Sigmoid colon (tissue), 7 donors: ENCODE measurements at regions of chr11 and their contacts with region 1.

Region 1: GRCh38 chr11:123246749-123247495 is 51.9 kb upstream of the CLMP start:
- DNase-seq: peak; percentile 91
- H3K4me3 ChIP-seq: no peak overlapping the region
- H3K27ac ChIP-seq: peak overlapping the region in 1 of 4 donors; percentile 5
- H3K4me1 ChIP-seq: peaks cover 0 to 22% (median 17%) of the 10 kb centered on the region in 4 donors
- H3K27me3 ChIP-seq: no peaks in the 10 kb centered on the region
- CTCF ChIP-seq: peak; percentile 84 to 99 (median 95)
- EP300 ChIP-seq: no peak
- POLR2A ChIP-seq: no peak

Region 2: GRCh38 chr11:123110356-123110755 is 136.6 kb before region 1 on chr11:
- intact Hi-C with region 1: loop called (anchors 1 kb)
- DNase-seq: no peak
- H3K4me3 ChIP-seq: no peak overlapping the region
- H3K27ac ChIP-seq: peak overlapping the region in 2 of 4 donors; percentile 47 to 59
- H3K4me1 ChIP-seq: peaks cover 0 to 44% (median 34%) of the 10 kb centered on the region in 4 donors
- H3K27me3 ChIP-seq: no peaks in the 10 kb centered on the region
- CTCF ChIP-seq: no peak
- EP300 ChIP-seq: no peak
- POLR2A ChIP-seq: no peak

Region 3: GRCh38 chr11:123166071-123166559 is 80.8 kb before region 1 on chr11:
- intact Hi-C with region 1: loop called (anchors 1 kb)
- DNase-seq: peak; percentile 84
- H3K4me3 ChIP-seq: no peak overlapping the region
- H3K27ac ChIP-seq: peak overlapping the region; percentile 68 to 83 (median 80)
- H3K4me1 ChIP-seq: peaks cover 0 to 74% (median 56%) of the 10 kb centered on the region in 4 donors
- H3K27me3 ChIP-seq: no peaks in the 10 kb centered on the region
- CTCF ChIP-seq: peak; percentile 20 to 71 (median 56)
- EP300 ChIP-seq: no peak
- POLR2A ChIP-seq: no peak